ENCODE measurements at regions of chr2 and their contacts with region 1.

Region 1: GRCh38 chr2:60335533-60336237 is 217.8 kb downstream of the BCL11A start:
- DNase-seq: peak in 1 of 10 donors; percentile 22
- H3K4me3 ChIP-seq: no peak overlapping the region
- H3K27ac ChIP-seq: peak overlapping the region in 4 of 59 donors; percentile 18 to 46 (median 34)
- H3K27me3 ChIP-seq: no peaks in the 10 kb centered on the region
- CTCF ChIP-seq: no peak

Region 2: DNA sequence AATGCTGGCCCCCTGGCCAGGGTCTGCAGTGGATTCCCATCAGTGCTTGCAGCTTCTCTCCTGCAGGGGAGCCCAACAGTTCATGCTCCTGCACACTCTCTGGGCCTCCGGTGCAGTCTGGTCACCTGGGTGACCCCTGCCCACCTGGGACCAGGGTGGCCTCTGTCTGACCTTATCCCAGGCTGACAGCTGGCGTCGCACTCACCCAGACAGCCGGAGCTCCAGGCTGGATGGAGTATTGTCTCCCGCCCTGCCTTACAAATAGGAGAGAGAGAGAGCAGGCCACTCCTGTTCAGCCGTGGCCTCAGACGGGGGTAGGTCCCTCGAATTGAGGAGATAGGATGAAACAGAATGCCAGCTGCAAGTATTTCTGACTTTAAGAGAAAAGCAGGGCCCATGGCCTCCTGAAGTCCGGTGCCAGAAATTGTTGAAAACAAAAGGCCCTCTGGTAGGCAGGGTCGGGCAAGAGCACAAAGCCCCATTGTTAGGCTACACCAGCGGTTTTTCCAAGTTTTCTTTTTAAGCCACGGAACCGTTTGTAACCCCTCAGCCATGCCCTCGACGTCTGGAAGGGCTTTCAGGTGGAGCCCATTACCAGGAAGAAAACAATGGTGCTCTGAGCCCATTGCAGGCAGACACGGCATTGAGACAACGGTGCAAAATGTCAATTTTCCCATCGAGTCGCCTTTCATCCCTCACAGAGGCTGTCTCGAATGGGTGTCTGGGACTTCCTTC is 40.6 kb before region 1 on chr2:
- intact Hi-C with region 1: loop called in 1 of 2 experiments (anchors 2 kb)
- DNase-seq: peak in 7 of 10 donors; percentile 10 to 64 (median 50)
- H3K4me3 ChIP-seq: peak overlapping the region in 56 of 59 donors; percentile 0 to 65 (median 40)
- H3K27ac ChIP-seq: peak overlapping the region in 58 of 59 donors; percentile 19 to 96 (median 85)
- H3K27me3 ChIP-seq: peaks cover 0 to 4% (median 0%) of the 10 kb centered on the region in 45 donors
- CTCF ChIP-seq: peak in 28 of 56 donors; percentile 9 to 55 (median 22)